K562 (cell line): ENCODE measurements at regions of chr3 and their contacts with region 1.

Region 1: DNA sequence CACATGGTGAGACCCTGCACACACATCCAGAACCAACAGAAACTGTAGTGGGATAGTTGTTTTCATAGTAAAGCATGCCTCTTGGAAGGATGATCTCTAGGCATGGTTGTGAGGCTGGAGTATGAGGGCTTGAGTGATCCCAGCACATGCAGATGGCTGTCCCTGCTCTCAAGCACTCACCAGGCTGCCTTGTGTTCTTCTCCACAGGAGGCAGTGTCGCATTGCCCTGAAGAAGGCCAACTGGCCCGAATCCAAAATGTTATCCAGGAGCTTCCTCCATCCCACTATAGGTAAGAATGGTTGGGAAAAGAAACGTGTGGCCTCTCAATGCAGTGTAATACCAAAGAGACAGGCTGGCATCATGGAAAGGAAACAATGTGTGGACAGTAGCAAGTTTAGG is 82.7 kb downstream of the TMEM39A start:
- DNase-seq: peak in 1 of 4 experiments; percentile 29
- ATAC-seq: peak; percentile 69
- H3K4me3 ChIP-seq: no peak overlapping the region
- H3K27ac ChIP-seq: no peak overlapping the region
- H3K4me1 ChIP-seq: no peaks in the 10 kb centered on the region
- H3K27me3 ChIP-seq: peaks cover 0 to 9% of the 10 kb centered on the region in 2 experiments; a peak in 2 of 5 replicates
- CTCF ChIP-seq: peak; percentile 9 to 27 (median 18); a peak in 2 of 6 replicates
- EP300 ChIP-seq: no peak
- POLR2A ChIP-seq: no peak
- RAD21 ChIP-seq: peak in 1 of 2 experiments; percentile 39; a peak in 2 of 4 replicates

Region 2: GRCh38 chr3:119173325-119173724 is 207.4 kb before region 1 on chr3 and contains the start of gene UPK1B:
- CTCF ChIA-PET with region 1: no interaction called
- POLR2A ChIA-PET with region 1: no interaction called
- in situ Hi-C with region 1: no loop called
- intact Hi-C with region 1: no loop called
- DNase-seq: peak in 3 of 4 experiments; percentile 10 to 37 (median 21)
- ATAC-seq: peak; percentile 80
- H3K4me3 ChIP-seq: no peak within 1 kb of the TSS
- H3K27ac ChIP-seq: no peak within 1 kb of the TSS
- H3K4me1 ChIP-seq: no peaks in the 10 kb centered on the region; a peak in 1 of 5 replicates
- H3K27me3 ChIP-seq: no peaks in the 10 kb centered on the region; a peak in 1 of 5 replicates
- CTCF ChIP-seq: no peak
- EP300 ChIP-seq: no peak
- POLR2A ChIP-seq: no peak
- RAD21 ChIP-seq: no peak
- polyA plus RNA-seq, gene UPK1B: 0.51 to 0.96 TPM

Region 3: GRCh38 chr3:119279101-119279554 is 101.6 kb before region 1 on chr3:
- CTCF ChIA-PET with region 1: no interaction called
- POLR2A ChIA-PET with region 1: no interaction called
- in situ Hi-C with region 1: no loop called
- intact Hi-C with region 1: loop called (anchors 5 kb)
- DNase-seq: no peak
- ATAC-seq: no peak
- H3K4me3 ChIP-seq: no peak overlapping the region
- H3K27ac ChIP-seq: no peak overlapping the region
- H3K4me1 ChIP-seq: no peaks in the 10 kb centered on the region
- H3K27me3 ChIP-seq: peaks cover 0 to 5% of the 10 kb centered on the region in 2 experiments; a peak in 3 of 5 replicates
- CTCF ChIP-seq: no peak
- EP300 ChIP-seq: no peak
- POLR2A ChIP-seq: no peak
- RAD21 ChIP-seq: no peak